Transverse colon (tissue), 4 donors: ENCODE measurements at regions of chr2 and their contacts with region 1.

Region 1: GRCh38 chr2:134118279-134119116 is 135.4 kb upstream of the MGAT5 start:
- DNase-seq: peak; percentile 91
- H3K4me3 ChIP-seq: no peak overlapping the region
- H3K27ac ChIP-seq: peak overlapping the region; percentile 24 to 97 (median 94)
- H3K4me1 ChIP-seq: peaks cover 11 to 33% (median 32%) of the 10 kb centered on the region in 4 donors
- H3K27me3 ChIP-seq: no peaks in the 10 kb centered on the region
- CTCF ChIP-seq: peak; percentile 71 to 84 (median 79)
- EP300 ChIP-seq: no peak
- POLR2A ChIP-seq: no peak

Region 2: DNA sequence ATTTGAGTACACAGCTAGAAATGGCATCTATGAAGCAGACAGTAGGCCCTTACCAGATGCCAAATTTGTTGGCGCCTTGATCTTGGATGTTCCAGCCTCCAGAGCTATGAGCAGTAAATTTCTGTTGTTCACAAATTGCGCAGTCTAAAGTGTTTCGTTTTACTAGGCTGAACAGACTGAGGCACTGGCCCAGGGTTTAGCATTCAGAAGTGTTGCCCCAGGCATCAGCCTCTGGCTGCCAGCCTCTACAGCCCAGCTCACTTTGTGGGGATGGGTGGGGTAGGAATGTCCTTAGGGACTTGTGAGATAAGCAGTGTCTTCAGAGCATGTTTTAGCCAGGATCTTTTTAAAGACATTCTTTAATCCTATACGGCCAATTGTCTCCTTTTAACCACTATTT is 83.9 kb after region 1 on chr2:
- in situ Hi-C with region 1: loop called in 3 of 4 experiments (anchors 5 to 10 kb)
- intact Hi-C with region 1: no loop called
- DNase-seq: no peak
- H3K4me3 ChIP-seq: no peak overlapping the region
- H3K27ac ChIP-seq: no peak overlapping the region
- H3K4me1 ChIP-seq: peaks cover 0 to 44% (median 9%) of the 10 kb centered on the region in 4 donors
- H3K27me3 ChIP-seq: no peaks in the 10 kb centered on the region
- CTCF ChIP-seq: no peak
- EP300 ChIP-seq: no peak
- POLR2A ChIP-seq: no peak

Region 3: DNA sequence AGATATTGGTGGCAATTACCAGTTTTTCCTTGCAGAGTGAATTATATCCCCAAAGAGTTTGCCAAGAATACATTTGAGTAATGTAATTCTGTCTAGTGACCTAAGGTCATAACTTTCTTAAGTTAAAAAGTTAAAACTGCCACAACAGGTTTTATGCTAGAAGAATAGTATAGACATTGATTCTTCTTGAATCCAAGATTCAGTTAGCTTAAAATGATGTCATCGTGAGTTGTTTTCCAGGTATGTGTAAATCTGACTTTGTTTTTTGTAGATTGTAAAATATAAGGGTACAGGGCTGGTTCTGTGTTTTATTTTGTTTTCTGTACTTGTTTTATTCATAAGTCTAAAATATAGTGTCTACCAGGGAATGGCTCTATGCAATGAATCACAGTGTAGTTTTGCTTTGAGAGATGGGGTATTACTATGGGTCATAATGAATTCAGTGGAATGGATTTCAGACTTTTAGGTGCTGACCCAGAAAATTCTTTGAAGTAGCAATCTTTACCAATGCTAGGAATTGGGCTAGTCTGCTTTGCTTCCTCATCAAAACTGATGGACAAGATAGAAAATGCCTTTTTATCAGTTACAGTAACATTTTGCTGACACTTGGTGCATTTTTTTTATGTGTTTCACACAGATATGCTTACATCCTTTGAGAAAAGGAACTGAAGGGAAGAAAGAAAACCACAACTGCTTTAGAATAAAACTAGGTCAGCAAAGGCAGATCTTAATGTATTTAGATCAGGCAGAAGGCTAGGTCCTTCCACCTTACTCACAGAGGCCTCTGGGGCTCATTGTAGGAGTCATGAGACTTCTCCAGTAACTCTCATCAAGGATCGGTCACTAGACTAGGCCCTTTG is 114.6 kb after region 1 on chr2:
- in situ Hi-C with region 1: loop called in 1 of 4 experiments (anchors 10 kb)
- intact Hi-C with region 1: no loop called
- DNase-seq: no peak
- H3K4me3 ChIP-seq: no peak overlapping the region
- H3K27ac ChIP-seq: peak overlapping the region; percentile 42 to 53 (median 46)
- H3K4me1 ChIP-seq: peaks cover 7 to 45% (median 25%) of the 10 kb centered on the region in 4 donors
- H3K27me3 ChIP-seq: no peaks in the 10 kb centered on the region
- CTCF ChIP-seq: no peak
- EP300 ChIP-seq: no peak
- POLR2A ChIP-seq: no peak

Region 4: GRCh38 chr2:134402410-134402809 is 283.9 kb after region 1 on chr2:
- in situ Hi-C with region 1: loop called in 1 of 4 experiments (anchors 10 kb)
- intact Hi-C with region 1: loop called (anchors 10 kb)
- DNase-seq: no peak
- H3K4me3 ChIP-seq: no peak overlapping the region
- H3K27ac ChIP-seq: peak overlapping the region in 2 of 4 donors; percentile 19 to 54
- H3K4me1 ChIP-seq: peaks cover under 1 to 15% (median 3%) of the 10 kb centered on the region in 4 donors
- H3K27me3 ChIP-seq: no peaks in the 10 kb centered on the region
- CTCF ChIP-seq: no peak
- EP300 ChIP-seq: no peak
- POLR2A ChIP-seq: no peak

Region 5: DNA sequence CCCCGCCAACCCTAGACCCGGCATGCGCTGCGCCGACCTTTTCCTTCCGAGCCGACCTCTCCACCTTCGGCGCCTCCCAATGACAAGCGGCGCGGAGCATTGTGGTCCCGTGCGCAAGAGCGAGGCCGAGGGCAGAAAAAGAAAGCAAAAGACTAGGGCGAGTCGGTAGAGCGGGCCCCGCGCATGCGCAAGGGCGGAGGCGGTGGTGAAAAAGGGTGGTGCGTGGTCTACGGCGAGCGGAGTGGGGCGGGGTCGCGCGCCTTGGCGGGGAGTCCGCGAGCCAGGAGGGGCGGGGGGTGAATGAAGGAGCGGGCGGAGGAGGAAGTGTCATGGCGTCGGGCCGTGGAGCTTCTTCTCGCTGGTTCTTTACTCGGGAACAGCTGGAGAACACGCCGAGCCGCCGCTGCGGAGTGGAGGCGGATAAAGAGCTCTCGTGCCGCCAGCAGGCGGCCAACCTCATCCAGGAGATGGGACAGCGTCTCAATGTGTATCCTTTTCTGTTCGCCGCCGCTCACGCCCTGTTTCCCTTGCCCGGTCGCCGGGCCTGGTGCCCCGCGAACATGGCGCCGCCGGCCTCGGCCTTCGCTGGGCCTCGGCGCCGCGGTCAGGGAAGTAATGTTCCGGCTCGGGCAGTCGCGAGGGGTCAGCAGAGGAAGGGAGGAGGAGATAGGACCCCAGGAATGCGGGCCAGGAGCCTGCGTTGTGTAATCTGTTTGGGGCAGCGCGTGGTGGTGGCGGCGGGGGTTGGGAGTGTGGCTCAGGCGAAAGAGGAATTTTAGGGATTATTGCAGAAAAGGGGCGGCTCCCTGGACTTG is 800.2 kb after region 1 on chr2 and contains the start of gene CCNT2:
- in situ Hi-C with region 1: loop called in 1 of 4 experiments (anchors 25 kb)
- intact Hi-C with region 1: no loop called
- DNase-seq: peak; percentile 100
- H3K4me3 ChIP-seq: peak within 1 kb of the TSS; percentile 81 to 99 (median 92)
- H3K27ac ChIP-seq: peak within 1 kb of the TSS; percentile 95 to 100 (median 98)
- H3K4me1 ChIP-seq: peaks cover 21 to 51% (median 33%) of the 10 kb centered on the region in 4 donors
- H3K27me3 ChIP-seq: no peaks in the 10 kb centered on the region
- CTCF ChIP-seq: peak in 2 of 5 experiments; percentile 3 to 20
- EP300 ChIP-seq: no peak
- POLR2A ChIP-seq: peak; percentile 49
- total RNA-seq, gene CCNT2: 24.7 to 57.5 (median 44.6) TPM